Activated CD4-positive, alpha-beta T cell treated with anti-CD3 and anti-CD28 coated beads, Interleukin-2, amount 10 ng/mL, durations not matched to agents 24 days and 14 days (primary cell): ENCODE measurements at regions of chr7 and their contacts with region 1.

Region 1: DNA sequence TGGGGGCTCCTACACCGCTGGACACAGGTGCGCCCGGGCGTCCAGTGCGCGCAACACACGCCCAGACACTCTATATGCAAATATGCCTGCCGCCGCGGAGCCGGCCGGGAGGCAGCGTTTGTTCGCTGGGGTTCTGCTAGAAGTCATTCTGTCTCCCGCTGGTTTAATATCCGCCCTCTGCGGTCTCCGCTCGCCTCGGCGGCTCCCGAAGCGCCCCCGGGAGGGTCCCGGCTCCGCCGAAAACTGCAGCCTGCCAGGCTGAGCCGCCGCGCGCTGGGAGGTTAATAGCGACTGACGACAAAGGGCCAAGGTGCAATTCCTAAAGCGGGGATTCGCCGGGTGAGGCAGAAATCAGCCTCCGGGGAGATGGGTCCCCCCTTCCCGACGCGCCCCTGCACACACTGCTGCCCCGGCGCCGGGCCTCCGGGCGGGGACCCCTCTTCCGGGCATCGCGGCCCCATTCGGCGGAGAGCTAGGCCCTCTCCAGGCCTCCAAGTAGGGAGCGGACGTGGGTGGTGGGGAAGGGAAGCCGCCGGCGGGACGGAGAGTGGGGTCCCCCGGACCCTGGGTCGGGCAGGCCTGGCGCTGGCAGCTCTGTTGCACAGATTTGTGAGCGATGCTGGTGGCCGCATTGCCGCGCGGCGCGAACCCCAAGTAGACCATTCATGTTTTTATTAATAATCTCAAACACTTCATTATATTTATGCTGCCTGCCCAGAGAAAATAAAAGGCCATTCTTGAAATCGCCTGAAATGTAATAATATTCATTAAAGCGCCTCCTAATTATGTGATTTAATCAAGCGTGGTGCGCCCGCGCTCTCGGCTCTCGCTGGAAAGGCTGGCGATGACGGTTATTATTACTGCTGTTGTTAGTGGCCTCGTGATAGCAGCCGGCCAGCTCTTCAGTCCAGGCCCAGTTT is 9.1 kb downstream of the EN2 start:
- DNase-seq: peak; percentile 77
- H3K4me3 Mint-ChIP-seq: no peak overlapping the region
- H3K27ac Mint-ChIP-seq: no peak overlapping the region
- H3K4me1 Mint-ChIP-seq: peaks cover 7% of the 10 kb centered on the region
- H3K27me3 Mint-ChIP-seq: peaks cover 84% of the 10 kb centered on the region

Region 2: GRCh38 chr7:155338632-155339320 is 128.3 kb before region 1 on chr7:
- intact Hi-C with region 1: no loop called
- DNase-seq: peak; percentile 77
- H3K4me3 Mint-ChIP-seq: peak overlapping the region; percentile 64
- H3K27ac Mint-ChIP-seq: peak overlapping the region; percentile 59
- H3K4me1 Mint-ChIP-seq: peaks cover 9% of the 10 kb centered on the region
- H3K27me3 Mint-ChIP-seq: peaks cover 29% of the 10 kb centered on the region

Region 3: DNA sequence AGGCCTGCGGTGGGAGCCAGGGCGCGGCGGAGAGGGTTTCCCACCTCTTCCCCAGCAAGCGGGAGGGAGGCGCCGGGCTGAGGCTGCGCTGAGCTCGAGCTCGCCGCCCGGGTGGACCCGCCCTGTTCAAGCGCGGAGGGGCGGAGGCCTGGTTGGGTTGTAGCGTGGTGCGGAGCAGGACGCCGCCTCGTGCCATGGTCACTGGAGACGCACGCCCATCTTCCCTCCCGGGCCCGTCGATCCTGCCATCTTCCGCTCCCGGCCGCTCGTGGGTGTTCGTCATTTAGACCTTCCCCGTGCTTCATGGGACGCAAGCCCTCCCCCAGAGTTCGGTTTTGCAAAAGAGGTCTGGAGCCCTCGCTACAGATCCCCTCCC is 18.5 kb before region 1 on chr7:
- intact Hi-C with region 1: loop called (anchors 2 kb)
- DNase-seq: no peak
- H3K4me3 Mint-ChIP-seq: no peak overlapping the region
- H3K27ac Mint-ChIP-seq: no peak overlapping the region
- H3K4me1 Mint-ChIP-seq: no peaks in the 10 kb centered on the region
- H3K27me3 Mint-ChIP-seq: peaks cover 68% of the 10 kb centered on the region

Region 4: DNA sequence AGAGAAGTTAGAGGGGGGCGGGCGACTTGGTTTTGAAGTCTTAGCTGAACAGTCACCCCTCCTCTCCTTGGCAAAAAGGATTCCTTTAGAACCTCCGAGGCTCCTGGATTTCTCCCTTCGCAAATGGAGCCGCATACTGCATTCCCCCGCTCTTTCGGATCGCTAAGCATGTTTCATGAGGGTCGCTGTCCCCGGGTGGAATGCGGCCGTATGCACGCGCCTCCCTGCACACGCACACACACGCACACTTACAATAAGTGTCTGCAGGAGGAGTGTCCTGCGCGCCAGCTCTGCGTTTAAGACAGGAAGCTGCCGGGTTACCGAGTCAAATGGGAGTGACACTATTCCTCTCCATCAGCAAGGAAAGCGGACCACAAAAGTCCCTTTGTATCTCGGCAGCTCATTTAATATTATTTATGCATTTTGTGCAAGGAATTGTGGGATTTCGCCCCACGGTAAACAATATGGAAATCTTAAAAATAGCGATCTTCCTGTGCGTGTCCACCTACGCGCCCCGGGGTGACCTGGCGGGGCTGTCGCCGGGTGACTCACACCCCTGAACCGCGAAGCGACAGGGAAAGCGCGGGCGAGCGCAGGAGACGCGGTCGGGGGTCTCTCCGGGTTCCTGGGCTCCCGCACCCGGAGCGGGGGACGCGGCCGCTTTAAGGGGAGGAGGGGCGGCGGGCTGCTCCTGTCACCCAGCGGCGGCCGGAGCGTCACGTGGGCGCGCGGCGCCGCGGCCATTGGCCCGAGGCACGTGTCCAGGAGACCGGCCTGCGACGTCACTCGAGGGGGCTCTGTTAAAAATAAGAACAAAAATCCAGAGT is 10.1 kb before region 1 on chr7:
- intact Hi-C with region 1: loop called (anchors 1 kb)
- DNase-seq: no peak
- H3K4me3 Mint-ChIP-seq: peak overlapping the region; percentile 64
- H3K27ac Mint-ChIP-seq: peak overlapping the region; percentile 79
- H3K4me1 Mint-ChIP-seq: peaks cover 9% of the 10 kb centered on the region
- H3K27me3 Mint-ChIP-seq: peaks cover 72% of the 10 kb centered on the region

Region 5: DNA sequence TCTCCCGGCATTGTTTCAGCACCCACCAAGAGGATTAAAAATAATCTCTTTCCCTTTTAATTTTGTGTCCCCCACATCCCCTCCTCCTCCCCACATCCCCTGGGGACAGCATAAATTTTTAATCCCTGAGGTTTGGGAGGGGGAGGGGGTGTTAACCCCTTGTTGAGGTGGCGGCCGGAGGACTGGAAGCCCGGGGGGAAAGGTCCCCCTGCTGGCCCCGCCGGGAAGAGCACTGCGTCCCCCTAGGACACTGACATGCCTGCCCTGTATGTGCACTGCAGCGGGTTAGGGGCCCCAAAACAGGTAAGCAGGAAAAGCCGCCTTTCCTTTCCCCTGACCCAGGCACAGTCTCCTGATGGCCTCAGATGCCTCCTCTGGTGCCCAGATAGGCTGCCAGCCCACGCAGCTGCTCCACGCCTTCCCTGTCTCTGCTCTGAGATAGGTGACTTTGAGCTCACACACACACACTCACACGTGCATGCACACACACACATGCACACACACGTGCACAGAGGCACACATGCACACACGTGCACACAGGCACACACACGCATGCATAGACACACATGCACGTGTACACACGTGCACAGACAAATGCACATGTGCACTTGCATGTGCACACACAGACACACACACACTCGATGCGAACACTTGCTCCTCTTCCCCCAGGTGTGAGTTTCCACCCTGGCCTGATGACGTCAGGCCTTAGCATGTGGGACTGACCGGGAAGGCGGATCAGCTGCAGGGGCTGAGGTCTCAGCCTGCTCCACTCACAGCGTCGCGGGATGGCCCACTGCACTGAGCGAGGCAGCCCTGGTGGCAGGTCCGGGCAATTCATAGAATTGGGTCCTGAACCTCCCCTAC is 67.0 kb after region 1 on chr7:
- intact Hi-C with region 1: loop called (anchors 2 kb)
- DNase-seq: peak; percentile 72
- H3K4me3 Mint-ChIP-seq: no peak overlapping the region
- H3K27ac Mint-ChIP-seq: no peak overlapping the region
- H3K4me1 Mint-ChIP-seq: peaks cover 7% of the 10 kb centered on the region
- H3K27me3 Mint-ChIP-seq: peaks cover 69% of the 10 kb centered on the region

Region 6: DNA sequence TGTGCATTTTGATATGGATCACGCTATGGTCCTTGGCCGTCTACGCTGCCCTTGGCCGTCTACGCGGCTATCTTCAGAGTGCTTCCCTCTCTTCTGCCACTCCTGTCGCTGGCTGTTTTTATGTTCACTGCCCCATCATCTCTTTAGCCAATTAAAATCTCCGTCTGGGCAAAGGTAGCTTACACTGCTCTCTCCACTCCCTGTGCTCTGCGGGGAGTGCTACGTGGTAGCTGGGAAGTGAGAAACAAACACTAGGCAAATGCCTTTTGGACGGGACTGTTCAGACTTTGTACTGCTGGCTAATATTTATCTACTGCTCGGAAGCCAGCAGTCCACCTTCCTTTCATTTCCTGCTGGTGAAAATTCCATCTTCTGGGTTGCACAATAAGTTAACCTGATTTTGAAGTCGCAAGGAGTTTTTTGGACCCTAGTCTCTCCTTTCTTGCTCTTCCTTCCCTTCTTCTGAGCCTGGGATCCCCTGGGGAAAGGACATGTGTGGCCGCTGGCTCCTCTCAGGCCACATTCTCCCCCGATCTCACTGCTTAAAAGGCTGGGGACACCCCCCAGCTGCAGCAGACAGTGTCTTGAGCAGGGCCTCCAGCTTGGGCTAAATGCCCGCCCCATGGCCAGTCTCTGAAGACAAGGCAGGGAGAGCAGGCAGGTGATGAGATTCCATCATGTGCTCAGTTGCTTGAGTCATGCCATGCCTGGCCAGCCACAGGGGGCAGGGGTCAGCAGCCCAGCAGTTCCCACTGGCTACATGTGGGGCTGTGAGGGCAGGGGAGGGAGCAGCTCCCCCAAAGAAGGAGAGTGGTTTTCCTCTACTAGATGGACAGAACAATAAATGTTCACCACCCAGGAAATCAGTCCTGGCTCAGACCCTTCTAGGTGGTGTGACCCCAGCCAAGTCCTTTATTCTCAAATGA is 151.9 kb after region 1 on chr7:
- intact Hi-C with region 1: no loop called
- DNase-seq: no peak
- H3K4me3 Mint-ChIP-seq: no peak overlapping the region
- H3K27ac Mint-ChIP-seq: no peak overlapping the region
- H3K4me1 Mint-ChIP-seq: no peaks in the 10 kb centered on the region
- H3K27me3 Mint-ChIP-seq: peaks cover 6% of the 10 kb centered on the region

Region 7: DNA sequence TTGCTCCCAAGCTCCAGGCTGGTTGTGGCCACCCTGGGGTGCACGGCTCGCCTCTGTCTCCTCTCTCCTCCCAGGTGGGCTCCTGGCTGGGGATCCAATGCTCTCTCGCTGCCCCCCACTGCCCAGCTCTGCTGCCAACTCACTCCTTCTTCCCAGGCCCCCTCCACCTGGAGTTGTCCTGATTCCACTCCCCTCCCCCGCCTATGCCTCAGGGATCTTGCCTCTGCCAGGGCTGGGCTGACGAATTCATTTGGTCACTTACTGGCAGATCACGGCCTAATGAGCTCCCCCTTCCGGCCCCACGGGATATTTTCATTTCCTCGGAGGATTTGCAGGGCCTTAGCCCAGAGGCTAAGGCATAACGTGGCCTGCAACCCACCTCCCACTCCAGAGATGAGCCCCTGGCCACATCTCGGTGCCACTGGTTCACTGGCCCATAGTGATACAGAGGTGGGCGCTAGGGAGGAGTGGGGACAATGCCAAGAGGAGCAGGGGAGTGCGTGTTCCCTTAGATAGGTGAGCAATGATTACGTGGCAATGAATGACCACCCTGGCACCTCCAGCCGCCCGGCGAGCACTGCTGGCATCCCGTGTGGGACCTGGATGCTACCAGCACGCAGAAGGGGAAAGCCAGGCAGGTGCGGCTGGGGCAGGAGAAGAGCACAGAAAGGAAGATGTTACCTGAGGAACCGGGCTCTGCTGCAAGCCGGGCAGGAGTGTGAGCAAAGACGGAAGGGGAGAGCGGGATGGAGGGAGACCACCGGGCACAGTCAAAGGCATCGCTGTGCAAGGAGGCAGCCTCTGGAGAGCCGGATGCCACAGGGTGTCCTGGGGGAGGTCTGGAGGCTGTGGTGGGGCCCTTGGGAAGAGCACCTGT is 689.9 kb after region 1 on chr7:
- intact Hi-C with region 1: no loop called
- DNase-seq: no peak
- H3K4me3 Mint-ChIP-seq: no peak overlapping the region
- H3K27ac Mint-ChIP-seq: no peak overlapping the region
- H3K4me1 Mint-ChIP-seq: no peaks in the 10 kb centered on the region
- H3K27me3 Mint-ChIP-seq: no peaks in the 10 kb centered on the region

Region 8: GRCh38 chr7:156334636-156335035 is 867.6 kb after region 1 on chr7:
- intact Hi-C with region 1: no loop called
- DNase-seq: no peak
- H3K4me3 Mint-ChIP-seq: no peak overlapping the region
- H3K27ac Mint-ChIP-seq: no peak overlapping the region
- H3K4me1 Mint-ChIP-seq: no peaks in the 10 kb centered on the region
- H3K27me3 Mint-ChIP-seq: peaks cover 7% of the 10 kb centered on the region

Region 9: DNA sequence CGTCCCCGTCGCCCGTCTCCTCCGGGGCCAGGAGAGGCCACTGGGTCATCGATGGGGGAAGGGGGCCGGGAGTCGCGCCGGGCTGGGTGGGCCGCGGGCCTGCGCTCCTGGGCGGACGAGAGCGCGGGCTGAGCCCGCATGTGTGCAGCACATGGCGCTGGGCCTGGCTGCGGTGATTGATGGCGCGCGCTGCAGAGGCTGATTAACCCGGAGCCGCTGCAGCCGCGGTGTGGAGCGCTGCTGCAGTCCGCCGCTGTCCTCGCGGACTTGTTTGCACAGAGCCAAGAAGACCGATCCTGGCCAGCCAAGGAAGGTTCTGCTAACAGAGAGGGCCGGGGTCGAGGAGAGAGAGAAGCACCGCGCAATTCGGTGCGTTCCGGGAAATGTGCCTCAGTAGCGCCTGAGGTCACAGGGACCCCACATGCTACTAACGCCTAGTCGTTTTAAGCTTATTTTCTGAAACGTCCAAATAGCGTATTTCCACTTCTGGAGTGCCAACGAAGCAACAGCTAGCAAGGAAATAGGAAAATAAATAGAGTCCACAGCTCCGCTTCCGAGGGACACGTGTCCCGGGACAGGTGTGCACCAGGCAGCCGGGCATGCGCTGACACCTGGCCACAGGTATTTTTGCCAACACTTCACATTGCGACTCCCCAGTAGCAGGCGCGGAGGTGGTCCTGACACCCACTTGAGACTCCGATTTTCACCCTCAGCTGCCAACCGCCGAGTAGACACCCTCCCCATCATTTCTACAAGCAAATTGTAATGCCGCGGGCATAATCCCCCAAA is 1537.2 kb after region 1 on chr7:
- intact Hi-C with region 1: loop called (anchors 5 kb)
- DNase-seq: no peak
- H3K4me3 Mint-ChIP-seq: no peak overlapping the region
- H3K27ac Mint-ChIP-seq: peak overlapping the region; percentile 51
- H3K4me1 Mint-ChIP-seq: peaks cover 17% of the 10 kb centered on the region
- H3K27me3 Mint-ChIP-seq: peaks cover 66% of the 10 kb centered on the region